Panc1 (cell line): ENCODE measurements at regions of chr5 and their contacts with region 1.

Region 1: GRCh38 chr5:17090839-17091238 is 126.6 kb upstream of the BASP1 start:
- DNase-seq: no peak
- ATAC-seq: no peak
- H3K4me3 ChIP-seq: no peak overlapping the region
- H3K27ac ChIP-seq: no peak overlapping the region
- H3K4me1 ChIP-seq: no peaks in the 10 kb centered on the region
- H3K27me3 ChIP-seq: no peaks in the 10 kb centered on the region
- CTCF ChIP-seq: no peak

Region 2: GRCh38 chr5:15502208-15502607 is 1588.6 kb before region 1 on chr5:
- CTCF ChIA-PET with region 1: no interaction called
- POLR2A ChIA-PET with region 1: interaction called, 10 read pairs
- in situ Hi-C with region 1: no loop called
- intact Hi-C with region 1: no loop called
- DNase-seq: no peak
- ATAC-seq: no peak
- H3K4me3 ChIP-seq: no peak overlapping the region
- H3K27ac ChIP-seq: no peak overlapping the region
- H3K4me1 ChIP-seq: no peaks in the 10 kb centered on the region
- H3K27me3 ChIP-seq: no peaks in the 10 kb centered on the region; the same call in 1 of the 2 replicates
- CTCF ChIP-seq: no peak

Region 3: DNA sequence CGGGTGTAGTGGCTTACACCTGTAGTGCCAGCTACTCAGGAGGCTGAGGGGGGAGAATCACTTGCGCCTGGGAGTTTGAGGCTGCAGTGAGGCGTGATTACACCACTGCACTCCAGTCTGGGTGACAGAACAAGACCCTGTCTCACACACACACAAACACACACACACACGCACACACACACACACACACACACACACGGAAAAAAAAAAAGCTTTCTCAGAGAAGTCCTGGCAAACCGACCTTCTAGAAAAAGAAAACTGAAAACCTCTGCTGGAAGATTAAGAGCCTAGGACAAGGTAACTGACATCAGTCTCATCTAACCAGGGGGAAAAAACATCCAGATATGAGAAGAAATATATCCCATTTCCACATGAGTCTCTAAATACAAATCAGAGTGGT is 333.7 kb before region 1 on chr5:
- CTCF ChIA-PET with region 1: interaction called, 22 read pairs
- POLR2A ChIA-PET with region 1: no interaction called
- in situ Hi-C with region 1: no loop called
- intact Hi-C with region 1: no loop called
- DNase-seq: no peak
- ATAC-seq: no peak
- H3K4me3 ChIP-seq: no peak overlapping the region
- H3K27ac ChIP-seq: no peak overlapping the region
- H3K4me1 ChIP-seq: no peaks in the 10 kb centered on the region
- H3K27me3 ChIP-seq: no peaks in the 10 kb centered on the region
- CTCF ChIP-seq: no peak

Region 4: DNA sequence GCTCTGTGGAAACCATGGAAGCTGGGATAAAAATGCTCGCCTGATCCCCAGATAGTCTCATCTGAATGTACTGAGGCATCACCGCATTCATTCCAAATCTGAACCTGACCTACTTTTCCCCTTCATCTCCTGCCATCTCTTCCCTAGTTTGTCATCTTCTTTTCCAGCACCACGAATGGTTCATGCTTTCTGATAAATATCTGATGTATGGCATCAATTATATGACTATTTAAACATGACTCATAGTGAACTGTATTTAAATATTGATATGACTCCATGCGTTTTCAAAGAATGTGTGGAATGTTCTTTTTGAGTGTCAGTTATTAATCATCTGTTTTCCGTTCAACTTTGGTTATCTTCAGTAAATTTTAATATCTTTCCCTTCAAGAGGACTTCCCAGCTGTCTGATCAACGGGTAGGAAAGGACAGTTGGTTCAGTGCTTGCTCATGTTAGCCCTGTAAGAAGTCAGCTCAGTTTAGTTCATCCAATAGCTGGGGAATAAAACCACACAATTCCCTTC is 147.7 kb after region 1 on chr5:
- CTCF ChIA-PET with region 1: no interaction called
- POLR2A ChIA-PET with region 1: no interaction called
- in situ Hi-C with region 1: no loop called
- intact Hi-C with region 1: no loop called
- DNase-seq: no peak
- ATAC-seq: peak; percentile 70
- H3K4me3 ChIP-seq: peak overlapping the region in 1 of 2 experiments; percentile 10; a peak in 1 of 4 replicates
- H3K27ac ChIP-seq: peak overlapping the region; percentile 83
- H3K4me1 ChIP-seq: peaks cover 83% of the 10 kb centered on the region
- H3K27me3 ChIP-seq: no peaks in the 10 kb centered on the region
- CTCF ChIP-seq: no peak